ENCODE measurements at regions of chr3 and their contacts with region 1.

Region 1: DNA sequence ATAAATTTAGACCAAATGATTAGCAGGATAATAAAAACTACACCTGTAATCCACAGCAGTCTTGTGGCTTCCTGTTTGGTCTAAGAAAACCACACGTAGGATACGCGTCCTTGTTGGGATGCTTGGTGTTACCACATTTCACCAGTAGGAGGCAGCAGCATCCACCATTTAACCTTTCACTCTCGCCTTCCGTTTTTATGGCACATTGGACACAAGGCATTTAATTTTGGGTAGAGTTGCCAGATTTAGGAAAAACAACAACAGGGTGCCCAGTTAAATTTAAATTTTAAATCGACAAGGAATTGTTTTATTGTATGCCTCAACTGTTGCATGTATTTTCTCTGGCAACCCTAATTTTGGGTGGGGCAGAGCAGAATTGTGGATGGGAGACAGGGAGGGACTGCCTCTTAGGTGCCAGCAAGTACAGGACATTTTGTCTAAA is 6.3 kb downstream of the LRRC31 start:
- DNase-seq: peak; percentile 62
- H3K4me3 ChIP-seq: no peak overlapping the region
- H3K27ac ChIP-seq: no peak overlapping the region
- H3K4me1 ChIP-seq: no peaks in the 10 kb centered on the region
- H3K27me3 ChIP-seq: no peaks in the 10 kb centered on the region
- CTCF ChIP-seq: peak in 3 of 4 experiments; percentile 84 to 92 (median 91)
- POLR2A ChIP-seq: no peak

Region 2: DNA sequence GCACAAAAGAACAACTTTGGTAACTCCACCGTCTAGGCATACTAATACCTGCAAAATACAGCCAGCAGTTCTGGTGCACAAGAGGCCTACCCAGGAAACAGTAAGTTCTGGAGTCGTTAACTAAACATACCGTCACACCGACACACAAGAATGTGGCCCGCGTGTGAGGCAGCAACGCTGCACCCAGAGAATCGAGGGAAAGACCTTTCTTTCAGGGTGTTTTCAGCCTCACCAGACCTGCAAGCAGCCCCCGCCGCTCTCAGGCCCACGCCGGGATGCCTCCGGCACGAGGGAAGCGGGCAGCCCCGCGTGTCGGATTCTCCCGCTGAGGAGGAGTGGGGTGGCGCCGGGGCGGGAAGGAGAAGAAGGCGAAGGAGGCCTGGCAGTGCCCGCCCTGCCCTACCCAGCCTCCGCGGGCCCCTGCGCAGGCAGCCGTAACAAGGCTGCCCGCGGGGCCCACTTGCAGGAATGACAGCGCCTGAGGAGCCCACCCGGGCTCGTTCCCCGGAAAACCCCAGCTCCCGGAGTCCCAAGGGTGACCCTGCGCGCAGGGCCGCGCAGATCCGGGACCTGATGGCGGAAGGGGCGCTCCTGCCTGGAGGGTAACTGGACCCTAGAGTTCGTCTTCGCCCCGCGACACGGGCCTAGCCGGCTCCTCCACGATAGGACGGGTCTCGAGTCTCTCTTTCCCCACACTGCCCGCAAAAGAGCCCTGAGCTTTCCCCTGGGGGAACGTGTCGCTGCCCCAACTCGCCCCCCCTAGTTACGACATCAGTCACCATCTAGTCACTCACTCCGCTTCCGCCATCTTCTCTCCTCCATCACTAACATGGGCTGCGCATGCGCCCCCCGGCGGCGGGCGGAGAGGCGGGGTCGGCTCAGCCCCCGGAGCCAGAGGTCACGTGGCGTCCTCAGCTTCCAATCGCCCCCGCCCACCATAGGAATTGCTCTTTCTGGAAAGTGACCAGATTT is 317.7 kb after region 1 on chr3 and contains the start of gene PHC3:
- intact Hi-C with region 1: loop called (anchors 10 kb)
- DNase-seq: peak; percentile 90
- H3K4me3 ChIP-seq: peak within 1 kb of the TSS; percentile 68 to 83
- H3K27ac ChIP-seq: peak within 1 kb of the TSS; percentile 94 to 97
- H3K4me1 ChIP-seq: no peaks in the 10 kb centered on the region
- H3K27me3 ChIP-seq: no peaks in the 10 kb centered on the region
- CTCF ChIP-seq: peak in 3 of 4 experiments; percentile 46 to 72 (median 55)
- POLR2A ChIP-seq: peak; percentile 73
- total RNA-seq, gene PHC3: 34.5 to 100 TPM

Measured in prostate gland (tissue), 2 donors.